ENCODE measurements at regions of chr15 and their contacts with region 1.

Region 1: DNA sequence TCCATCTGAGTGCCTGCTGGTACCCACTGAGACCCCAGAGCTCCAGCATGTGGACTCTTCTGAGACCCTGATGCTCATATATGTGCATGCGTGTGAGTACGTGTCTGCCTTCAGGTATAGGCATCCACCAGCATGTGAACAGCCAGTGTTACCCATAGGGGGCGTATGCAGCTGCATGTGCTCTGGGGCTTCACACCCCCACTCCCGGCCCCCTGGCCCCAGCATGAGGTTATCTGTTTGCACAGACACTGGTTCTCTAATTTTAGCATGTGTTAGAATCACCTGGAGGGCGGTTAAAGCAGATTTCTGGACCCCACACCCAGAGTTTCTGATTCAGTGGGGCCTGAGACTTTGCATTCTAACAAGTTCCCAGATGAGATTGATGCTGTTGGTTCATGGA is 824 bp upstream of the CILP start:
- DNase-seq: peak; percentile 51 to 78 (median 76)
- H3K4me3 ChIP-seq: no peak overlapping the region
- H3K27ac ChIP-seq: no peak overlapping the region
- H3K4me1 ChIP-seq: peaks cover 0 to 14% (median 4%) of the 10 kb centered on the region in 4 experiments
- H3K27me3 ChIP-seq: no peaks in the 10 kb centered on the region

Region 2: DNA sequence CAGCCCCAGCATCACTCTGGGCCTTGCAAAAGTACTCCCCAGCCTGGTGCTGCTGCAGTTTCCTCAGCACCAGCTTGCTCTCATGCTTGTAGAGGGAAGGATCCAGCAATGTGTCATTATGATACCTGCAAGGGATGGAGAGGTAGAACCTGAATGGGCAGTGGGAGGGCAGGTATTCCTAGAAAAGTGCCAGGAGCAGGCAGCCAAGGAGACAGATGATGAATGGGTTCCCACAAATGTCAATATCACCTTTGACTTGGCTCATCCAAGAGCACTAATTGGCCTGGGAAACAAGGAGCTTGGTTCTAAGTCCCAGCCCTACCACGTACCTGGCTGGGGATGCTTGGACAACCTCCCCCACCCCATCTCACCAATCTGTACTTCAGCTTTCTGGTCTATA is 10.2 kb before region 1 on chr15:
- CTCF ChIA-PET with region 1: interaction called, 10 read pairs
- POLR2A ChIA-PET with region 1: interaction called, 5 read pairs
- DNase-seq: no peak
- H3K4me3 ChIP-seq: no peak overlapping the region
- H3K27ac ChIP-seq: no peak overlapping the region
- H3K4me1 ChIP-seq: no peaks in the 10 kb centered on the region
- H3K27me3 ChIP-seq: no peaks in the 10 kb centered on the region

Measured in common myeloid progenitor, CD34-positive (primary cell).